ENCODE measurements at regions of chr2 and their contacts with region 1.

Region 1: DNA sequence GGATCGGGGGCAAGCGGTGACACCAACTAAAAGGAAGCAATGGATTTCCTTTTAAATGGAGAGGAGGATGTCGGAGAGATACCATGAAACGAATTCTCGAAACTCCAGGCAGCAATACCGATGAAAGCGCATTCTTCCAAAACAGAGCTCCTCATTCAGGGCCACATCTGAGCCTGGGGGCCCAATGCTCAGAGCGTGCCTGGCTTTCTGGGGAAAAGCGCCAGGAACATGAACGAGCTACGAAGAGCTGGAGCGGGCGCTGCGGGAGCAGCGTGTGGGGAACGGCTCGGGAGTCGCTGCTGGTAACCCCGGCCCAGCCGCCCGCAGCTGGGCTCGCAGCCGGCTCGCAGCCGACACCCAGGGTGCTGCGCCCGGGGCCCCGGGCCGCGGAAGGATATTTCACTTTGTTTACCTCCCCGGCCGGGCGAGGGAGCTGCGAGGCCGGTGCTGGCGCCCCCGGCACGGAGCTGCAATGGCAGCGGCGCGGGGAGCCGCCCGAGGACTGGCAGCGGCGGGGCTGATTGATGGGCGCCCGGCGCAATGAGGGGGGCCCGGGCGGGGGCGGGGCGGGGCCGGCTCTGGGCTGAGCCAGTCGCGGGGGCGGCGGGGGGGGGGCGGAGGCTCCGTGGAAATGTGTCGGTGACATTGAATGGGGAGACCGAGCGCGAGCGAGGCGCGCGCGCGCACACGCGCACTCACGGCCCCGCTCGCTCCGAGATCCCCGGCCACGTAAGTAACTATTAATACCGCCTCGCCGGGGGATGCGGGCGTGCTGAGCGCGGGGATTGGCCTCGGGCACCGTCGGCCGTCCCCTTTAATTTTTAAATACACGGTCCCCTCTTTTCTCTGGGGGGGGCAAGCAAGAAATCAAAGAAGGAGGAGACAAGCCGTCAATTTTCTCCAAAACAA is at the start of gene TRIB2:
- DNase-seq: peak; percentile 85
- H3K4me3 ChIP-seq: peak within 1 kb of the TSS; percentile 80 to 95 (median 82)
- H3K27ac ChIP-seq: peak within 1 kb of the TSS; percentile 89
- H3K4me1 ChIP-seq: peaks cover 30% of the 10 kb centered on the region
- H3K27me3 ChIP-seq: no peaks in the 10 kb centered on the region
- CTCF ChIP-seq: peak in 1 of 2 donors; percentile 1
- POLR2A ChIP-seq: peak; percentile 67
- total RNA-seq, gene TRIB2: 17.6 and 20.5 TPM in 2 replicates

Region 2: GRCh38 chr2:11829947-11830707 is 886.4 kb before region 1 on chr2:
- CTCF ChIA-PET with region 1: interaction called, 61 read pairs
- POLR2A ChIA-PET with region 1: interaction called, 8 read pairs
- dilution Hi-C with region 1: no loop called
- intact Hi-C with region 1: loop called (anchors 1 kb)
- DNase-seq: peak; percentile 96
- H3K4me3 ChIP-seq: peak overlapping the region; percentile 13 to 47 (median 17)
- H3K27ac ChIP-seq: peak overlapping the region; percentile 73
- H3K4me1 ChIP-seq: peaks cover 30% of the 10 kb centered on the region
- H3K27me3 ChIP-seq: no peaks in the 10 kb centered on the region
- CTCF ChIP-seq: peak; percentile 27 to 43
- POLR2A ChIP-seq: no peak

Region 3: DNA sequence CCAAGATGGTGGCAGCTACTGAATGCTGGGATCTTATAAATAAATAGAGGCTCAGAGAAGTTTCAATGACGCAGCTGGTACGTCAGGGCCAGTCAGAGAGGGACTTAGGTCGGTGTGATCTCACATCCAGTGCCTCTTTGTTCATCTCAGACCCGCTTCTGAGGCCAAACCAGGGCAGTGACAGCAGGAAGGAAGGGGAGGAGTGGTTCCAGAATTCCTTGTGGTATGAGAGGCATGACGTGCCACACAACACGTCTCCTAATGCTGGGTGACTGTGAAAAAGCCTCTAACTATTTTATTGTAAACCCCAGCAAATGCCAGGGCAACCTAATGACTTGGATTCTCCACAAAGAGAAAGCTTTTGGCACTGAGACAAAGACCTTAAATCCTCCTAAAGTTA is 546.8 kb before region 1 on chr2:
- CTCF ChIA-PET with region 1: interaction called, 17 read pairs
- POLR2A ChIA-PET with region 1: no interaction called
- dilution Hi-C with region 1: no loop called
- intact Hi-C with region 1: no loop called
- DNase-seq: peak; percentile 76
- H3K4me3 ChIP-seq: no peak overlapping the region
- H3K27ac ChIP-seq: peak overlapping the region; percentile 24
- H3K4me1 ChIP-seq: peaks cover 19% of the 10 kb centered on the region
- H3K27me3 ChIP-seq: no peaks in the 10 kb centered on the region
- CTCF ChIP-seq: no peak
- POLR2A ChIP-seq: no peak

Region 4: GRCh38 chr2:12484536-12485115 is 231.9 kb before region 1 on chr2:
- CTCF ChIA-PET with region 1: no interaction called
- POLR2A ChIA-PET with region 1: no interaction called
- dilution Hi-C with region 1: no loop called
- intact Hi-C with region 1: loop called (anchors 5 kb)
- DNase-seq: peak; percentile 53
- H3K4me3 ChIP-seq: no peak overlapping the region
- H3K27ac ChIP-seq: no peak overlapping the region
- H3K4me1 ChIP-seq: peaks cover 18% of the 10 kb centered on the region
- H3K27me3 ChIP-seq: no peaks in the 10 kb centered on the region
- CTCF ChIP-seq: no peak
- POLR2A ChIP-seq: no peak

Region 5: DNA sequence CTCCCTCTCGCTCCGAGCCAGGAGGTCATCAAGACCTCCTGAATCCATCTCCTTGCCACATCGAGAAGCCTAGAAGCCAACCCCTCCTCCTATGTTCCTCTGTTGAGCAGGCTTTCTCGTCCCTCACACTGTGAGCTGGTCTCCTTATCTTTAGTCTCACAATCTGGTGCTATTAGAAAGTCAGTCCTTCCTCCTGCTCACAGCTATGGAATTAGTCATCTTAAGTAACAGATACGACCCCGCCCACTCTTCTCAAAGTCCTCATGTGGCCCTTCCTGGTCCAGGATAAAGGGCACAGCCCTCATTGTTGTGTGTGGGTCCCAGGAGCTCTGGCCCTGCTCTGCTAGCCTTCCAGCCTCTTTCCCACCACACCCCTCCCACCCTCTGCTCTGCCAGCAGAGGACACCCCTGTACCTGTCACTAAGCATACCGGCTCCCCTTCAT is 41.2 kb before region 1 on chr2:
- CTCF ChIA-PET with region 1: interaction called, 36 read pairs
- POLR2A ChIA-PET with region 1: interaction called, 8 read pairs
- dilution Hi-C with region 1: no loop called
- intact Hi-C with region 1: loop called (anchors 1 kb)
- DNase-seq: peak; percentile 69
- H3K4me3 ChIP-seq: no peak overlapping the region
- H3K27ac ChIP-seq: peak overlapping the region; percentile 81
- H3K4me1 ChIP-seq: peaks cover 33% of the 10 kb centered on the region
- H3K27me3 ChIP-seq: no peaks in the 10 kb centered on the region
- CTCF ChIP-seq: no peak
- POLR2A ChIP-seq: no peak

Region 6: GRCh38 chr2:12819103-12819475 is 102.6 kb after region 1 on chr2:
- CTCF ChIA-PET with region 1: interaction called, 13 read pairs
- POLR2A ChIA-PET with region 1: interaction called, 4 read pairs
- dilution Hi-C with region 1: no loop called
- intact Hi-C with region 1: loop called (anchors 1 kb)
- DNase-seq: peak; percentile 97
- H3K4me3 ChIP-seq: peak overlapping the region in 1 of 3 experiments; percentile 41
- H3K27ac ChIP-seq: peak overlapping the region; percentile 96
- H3K4me1 ChIP-seq: peaks cover 32% of the 10 kb centered on the region
- H3K27me3 ChIP-seq: no peaks in the 10 kb centered on the region
- CTCF ChIP-seq: no peak
- POLR2A ChIP-seq: peak; percentile 52

Region 7: DNA sequence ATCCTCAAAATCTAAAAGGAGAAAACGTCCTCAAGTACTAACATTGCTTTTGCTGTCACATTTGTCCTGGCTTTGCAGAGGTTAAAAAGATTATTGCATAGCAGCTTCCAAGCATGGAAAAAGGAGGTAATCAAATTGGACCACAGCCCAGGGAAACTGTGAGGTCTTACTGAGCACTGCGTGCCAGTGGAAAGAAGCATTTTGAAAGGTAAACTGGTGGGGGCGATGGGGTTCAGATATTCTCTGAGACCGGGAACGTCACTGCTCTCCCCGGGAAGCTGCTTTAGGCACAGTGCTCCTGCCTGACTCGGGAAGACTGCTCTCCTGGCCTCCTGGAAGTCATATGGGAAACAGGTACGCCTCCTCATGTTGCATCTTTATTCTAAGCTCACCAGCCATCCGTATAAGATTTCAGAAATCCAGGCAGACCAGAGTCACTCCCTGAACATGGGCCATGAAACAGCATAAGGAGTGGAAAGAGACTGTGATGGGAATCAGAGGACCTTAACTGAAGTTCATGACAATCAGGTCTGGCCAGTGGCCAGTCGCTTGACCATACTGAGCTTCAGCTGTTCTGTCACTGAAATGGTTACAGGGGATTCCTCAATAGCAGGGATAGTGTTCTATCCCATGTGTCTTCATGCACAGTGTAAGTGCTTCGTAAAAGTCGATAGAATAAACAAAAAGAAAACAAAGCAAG is 284.3 kb after region 1 on chr2:
- CTCF ChIA-PET with region 1: interaction called, 135 read pairs
- POLR2A ChIA-PET with region 1: no interaction called
- dilution Hi-C with region 1: no loop called
- intact Hi-C with region 1: no loop called
- DNase-seq: peak; percentile 90
- H3K4me3 ChIP-seq: no peak overlapping the region
- H3K27ac ChIP-seq: no peak overlapping the region
- H3K4me1 ChIP-seq: peaks cover 18% of the 10 kb centered on the region
- H3K27me3 ChIP-seq: no peaks in the 10 kb centered on the region
- CTCF ChIP-seq: no peak
- POLR2A ChIP-seq: no peak